Activated CD8-positive, alpha-beta T cell treated with anti-CD3 and anti-CD28 coated beads for 36 hours (primary cell): ENCODE measurements at regions of chr17 and their contacts with region 1.

Region 1: GRCh38 chr17:63406689-63407330 is 39.3 kb downstream of the CYB561 start:
- DNase-seq: peak; percentile 87
- ATAC-seq: peak; percentile 87
- H3K4me3 Mint-ChIP-seq: no peak overlapping the region
- H3K27ac Mint-ChIP-seq: no peak overlapping the region
- H3K4me1 Mint-ChIP-seq: peaks cover 3% of the 10 kb centered on the region
- H3K27me3 Mint-ChIP-seq: no peaks in the 10 kb centered on the region
- CTCF ChIP-seq: peak; percentile 79

Region 2: GRCh38 chr17:62671583-62672312 is 735.1 kb before region 1 on chr17:
- CTCF ChIA-PET with region 1: interaction called, 27 read pairs
- POLR2A ChIA-PET with region 1: no interaction called
- intact Hi-C with region 1: no loop called
- DNase-seq: no peak
- ATAC-seq: no peak
- H3K4me3 Mint-ChIP-seq: no peak overlapping the region
- H3K27ac Mint-ChIP-seq: no peak overlapping the region
- H3K4me1 Mint-ChIP-seq: peaks cover 9% of the 10 kb centered on the region
- H3K27me3 Mint-ChIP-seq: no peaks in the 10 kb centered on the region
- CTCF ChIP-seq: no peak

Region 3: GRCh38 chr17:63082273-63082993 is 324.4 kb before region 1 on chr17:
- CTCF ChIA-PET with region 1: interaction called, 44 read pairs
- POLR2A ChIA-PET with region 1: interaction called, 3 read pairs
- intact Hi-C with region 1: loop called (anchors 5 kb)
- DNase-seq: no peak
- ATAC-seq: no peak
- H3K4me3 Mint-ChIP-seq: no peak overlapping the region
- H3K27ac Mint-ChIP-seq: no peak overlapping the region
- H3K4me1 Mint-ChIP-seq: peaks cover 2% of the 10 kb centered on the region
- H3K27me3 Mint-ChIP-seq: no peaks in the 10 kb centered on the region
- CTCF ChIP-seq: peak; percentile 47

Region 4: DNA sequence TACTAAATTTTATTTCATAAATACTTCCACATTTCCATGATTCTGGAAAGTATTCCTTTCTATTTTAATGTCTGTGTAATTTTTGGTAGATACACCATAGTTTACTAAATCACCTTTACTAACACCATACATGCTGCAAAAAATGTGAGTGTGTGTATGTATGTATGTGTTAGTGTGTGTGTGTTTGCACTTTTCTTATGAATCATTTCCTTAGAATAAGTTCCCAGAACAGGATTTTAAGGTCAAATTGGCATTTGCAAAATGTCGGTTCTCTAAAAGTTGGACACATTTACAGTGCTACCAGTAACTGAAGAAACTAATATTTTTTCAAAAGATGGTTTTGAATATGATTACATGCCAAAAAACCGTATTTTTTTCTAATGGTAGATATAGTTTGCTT is 97.8 kb before region 1 on chr17:
- CTCF ChIA-PET with region 1: no interaction called
- POLR2A ChIA-PET with region 1: no interaction called
- intact Hi-C with region 1: no loop called
- DNase-seq: no peak
- ATAC-seq: no peak
- H3K4me3 Mint-ChIP-seq: no peak overlapping the region
- H3K27ac Mint-ChIP-seq: no peak overlapping the region
- H3K4me1 Mint-ChIP-seq: peaks cover 11% of the 10 kb centered on the region
- H3K27me3 Mint-ChIP-seq: no peaks in the 10 kb centered on the region
- CTCF ChIP-seq: no peak

Region 5: DNA sequence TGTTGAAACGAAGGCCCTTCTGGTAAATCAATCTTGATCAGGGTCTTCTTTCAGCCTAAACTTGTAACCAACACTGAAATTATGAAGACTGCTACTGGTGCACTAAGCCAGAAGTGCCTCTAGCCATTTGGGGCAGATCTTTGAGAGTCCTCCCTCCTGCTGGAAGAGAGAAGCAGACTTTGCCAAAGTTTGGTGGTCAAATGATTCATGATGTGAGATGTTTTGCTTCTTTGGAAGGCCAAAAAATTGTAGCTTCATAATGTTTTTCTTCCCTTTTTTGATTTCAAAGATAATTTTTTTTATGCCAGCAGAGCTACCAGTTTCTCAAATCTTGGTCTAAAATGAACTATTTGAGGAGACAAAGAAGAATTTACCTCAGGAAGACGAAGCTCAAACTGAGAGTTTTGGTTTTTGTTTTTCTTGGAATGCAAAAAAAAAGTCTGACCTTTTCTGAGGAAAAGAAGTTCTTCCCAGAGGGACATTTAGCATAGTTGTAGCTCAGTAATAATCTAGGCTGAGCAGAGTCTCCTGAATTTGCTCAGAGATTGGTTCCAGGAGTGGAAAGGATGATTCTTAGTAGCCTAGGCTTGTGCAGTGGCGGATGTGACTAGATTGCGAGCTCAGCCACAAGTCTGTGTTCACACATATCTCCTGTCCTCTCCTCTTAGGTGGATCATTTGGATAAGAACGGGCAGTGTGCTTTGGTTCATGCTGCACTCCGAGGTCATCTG is 11.6 kb before region 1 on chr17:
- CTCF ChIA-PET with region 1: interaction called, 17 read pairs
- POLR2A ChIA-PET with region 1: interaction called, 3 read pairs
- intact Hi-C with region 1: no loop called
- DNase-seq: no peak
- ATAC-seq: no peak
- H3K4me3 Mint-ChIP-seq: no peak overlapping the region
- H3K27ac Mint-ChIP-seq: no peak overlapping the region
- H3K4me1 Mint-ChIP-seq: no peaks in the 10 kb centered on the region
- H3K27me3 Mint-ChIP-seq: no peaks in the 10 kb centered on the region
- CTCF ChIP-seq: no peak

Region 6: DNA sequence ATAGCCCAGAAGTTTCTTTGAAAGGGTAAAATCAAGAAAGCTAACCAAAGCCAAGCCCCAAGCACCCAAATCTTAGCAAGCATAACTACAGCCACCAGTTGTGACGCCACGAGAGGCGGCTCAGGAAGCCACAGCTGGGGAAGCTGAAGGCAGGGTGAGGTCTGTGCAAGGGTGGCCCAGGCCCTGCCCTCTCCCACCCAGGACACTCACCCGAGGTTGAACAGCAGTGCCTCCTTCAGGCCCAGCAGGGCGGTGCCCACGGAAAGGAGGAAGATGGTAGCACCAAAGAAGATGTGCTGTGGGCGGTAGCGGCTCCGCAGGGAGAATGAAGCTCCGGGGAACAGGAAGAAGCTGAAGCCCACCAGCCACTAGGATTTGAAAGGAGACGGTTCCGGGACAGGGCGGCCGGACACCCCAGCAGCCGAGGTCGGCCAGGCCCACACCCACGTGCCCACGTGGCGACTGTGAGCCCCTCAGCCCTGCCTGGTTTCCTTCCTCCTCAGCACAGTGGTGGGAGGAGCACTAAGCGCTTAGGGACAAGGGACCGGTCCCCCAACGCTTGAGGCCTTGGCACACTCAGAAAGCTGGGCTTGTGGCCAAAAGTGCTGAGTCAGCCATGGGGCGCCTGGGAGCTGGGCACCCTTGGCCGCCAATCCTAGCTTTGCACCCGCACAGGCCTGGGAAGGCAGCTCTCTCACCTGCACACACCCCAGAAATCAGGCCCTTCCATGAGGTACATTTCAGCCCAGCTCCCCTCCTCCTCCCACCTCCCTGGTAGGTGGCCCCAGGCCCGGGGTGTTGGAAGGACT is 28.3 kb after region 1 on chr17:
- CTCF ChIA-PET with region 1: interaction called, 10 read pairs
- POLR2A ChIA-PET with region 1: no interaction called
- intact Hi-C with region 1: no loop called
- DNase-seq: peak; percentile 58
- ATAC-seq: peak; percentile 71
- H3K4me3 Mint-ChIP-seq: peak overlapping the region; percentile 35
- H3K27ac Mint-ChIP-seq: peak overlapping the region; percentile 80
- H3K4me1 Mint-ChIP-seq: peaks cover 32% of the 10 kb centered on the region
- H3K27me3 Mint-ChIP-seq: no peaks in the 10 kb centered on the region
- CTCF ChIP-seq: no peak

Region 7: GRCh38 chr17:63453031-63453461 is 46.2 kb after region 1 on chr17:
- CTCF ChIA-PET with region 1: no interaction called
- POLR2A ChIA-PET with region 1: no interaction called
- intact Hi-C with region 1: no loop called
- DNase-seq: no peak
- ATAC-seq: no peak
- H3K4me3 Mint-ChIP-seq: no peak overlapping the region
- H3K27ac Mint-ChIP-seq: no peak overlapping the region
- H3K4me1 Mint-ChIP-seq: peaks cover 11% of the 10 kb centered on the region
- H3K27me3 Mint-ChIP-seq: peaks cover 3% of the 10 kb centered on the region
- CTCF ChIP-seq: no peak